Mammary epithelial cell (primary cell): ENCODE measurements at regions of chr4 and their contacts with region 1.

Region 1: GRCh38 chr4:176123710-176124407 is 58.2 kb downstream of the WDR17 start:
- DNase-seq: peak; percentile 3
- H3K4me3 ChIP-seq: no peak overlapping the region
- H3K27ac ChIP-seq: no peak overlapping the region
- H3K4me1 ChIP-seq: no peaks in the 10 kb centered on the region
- H3K27me3 ChIP-seq: no peaks in the 10 kb centered on the region
- CTCF ChIP-seq: peak; percentile 47 to 75

Region 2: GRCh38 chr4:176034499-176034898 is 89.4 kb before region 1 on chr4:
- CTCF ChIA-PET with region 1: no interaction called
- dilution Hi-C with region 1: no loop called
- in situ Hi-C with region 1: no loop called
- intact Hi-C with region 1: loop called (anchors 1 kb)
- DNase-seq: peak; percentile 4
- H3K4me3 ChIP-seq: no peak overlapping the region
- H3K27ac ChIP-seq: no peak overlapping the region
- H3K4me1 ChIP-seq: no peaks in the 10 kb centered on the region
- H3K27me3 ChIP-seq: no peaks in the 10 kb centered on the region
- CTCF ChIP-seq: peak in 1 of 2 donors; percentile 42